K562 (cell line): ENCODE measurements at regions of chr2 and their contacts with region 1.

Region 1: GRCh38 chr2:179751163-179751809 is 110.1 kb downstream of the ZNF385B start:
- DNase-seq: peak in 2 of 4 experiments; percentile 11 to 44
- ATAC-seq: peak; percentile 59; the same call in 2 of the 3 replicates
- H3K4me3 ChIP-seq: no peak overlapping the region
- H3K27ac ChIP-seq: no peak overlapping the region
- H3K4me1 ChIP-seq: no peaks in the 10 kb centered on the region
- H3K27me3 ChIP-seq: no peaks in the 10 kb centered on the region
- CTCF ChIP-seq: peak; percentile 39 to 79 (median 56); a peak in 4 of 6 replicates
- EP300 ChIP-seq: no peak
- POLR2A ChIP-seq: no peak
- RAD21 ChIP-seq: peak; percentile 74 to 87

Region 2: DNA sequence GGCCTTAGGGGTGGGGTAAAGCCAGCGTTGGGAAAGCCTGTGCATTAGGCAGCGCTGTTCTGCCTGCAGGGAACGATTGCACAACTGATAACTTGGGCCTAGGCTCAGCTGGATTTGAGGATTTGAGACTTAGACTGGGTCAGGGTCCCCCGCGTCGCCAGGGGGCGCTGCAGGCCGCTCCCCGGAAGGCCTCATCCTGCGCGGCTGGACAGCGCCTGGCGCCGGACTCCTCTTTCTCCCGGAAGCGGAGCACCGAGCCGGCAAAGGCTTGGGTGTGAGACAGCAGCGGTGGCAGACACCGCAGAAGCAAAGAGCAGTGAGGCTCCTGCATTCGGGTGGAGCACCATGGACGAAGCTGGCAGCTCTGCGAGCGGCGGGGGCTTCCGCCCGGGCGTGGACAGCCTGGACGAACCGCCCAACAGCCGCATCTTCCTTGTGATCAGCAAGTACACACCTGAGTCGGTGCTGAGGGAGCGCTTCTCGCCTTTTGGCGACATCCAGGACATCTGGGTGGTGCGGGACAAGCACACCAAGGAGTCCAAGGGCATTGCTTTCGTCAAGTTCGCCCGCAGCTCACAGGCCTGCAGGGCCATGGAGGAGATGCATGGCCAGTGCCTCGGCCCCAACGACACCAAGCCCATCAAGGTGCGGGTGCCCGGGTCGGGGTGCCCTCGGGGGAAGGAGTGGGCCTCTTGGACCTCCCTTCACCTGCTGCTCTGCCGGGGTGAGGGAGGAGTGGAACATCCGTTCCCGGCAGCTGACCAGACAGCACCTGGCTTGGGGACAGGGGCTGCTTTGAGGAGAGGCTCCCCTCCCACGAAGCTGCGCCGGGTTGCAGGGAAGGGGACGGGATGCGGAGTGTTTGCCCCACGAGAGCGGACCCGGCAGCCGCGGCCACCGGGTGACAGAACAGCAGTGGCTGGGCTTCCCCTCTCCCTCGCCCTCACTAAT is 1638.8 kb before region 1 on chr2 and contains the start of gene RBM45:
- CTCF ChIA-PET with region 1: no interaction called
- POLR2A ChIA-PET with region 1: no interaction called
- in situ Hi-C with region 1: no loop called
- intact Hi-C with region 1: loop called (anchors 5 kb)
- DNase-seq: peak; percentile 95 to 96 (median 95)
- ATAC-seq: peak; percentile 97
- H3K4me3 ChIP-seq: peak within 1 kb of the TSS; percentile 66
- H3K27ac ChIP-seq: peak within 1 kb of the TSS; percentile 54; the same call in 2 of the 3 replicates
- H3K4me1 ChIP-seq: peaks cover 10 to 16% of the 10 kb centered on the region in 2 experiments; a peak in 3 of 5 replicates
- H3K27me3 ChIP-seq: no peaks in the 10 kb centered on the region; a peak in 1 of 5 replicates
- CTCF ChIP-seq: peak; percentile 97 to 99 (median 98)
- EP300 ChIP-seq: peak; percentile 61
- POLR2A ChIP-seq: peak; percentile 93
- RAD21 ChIP-seq: peak; percentile 79 to 86
- polyA plus RNA-seq, gene RBM45: 6.7 to 9.9 TPM

Region 3: GRCh38 chr2:178761759-178762371 is 989.4 kb before region 1 on chr2:
- CTCF ChIA-PET with region 1: no interaction called
- POLR2A ChIA-PET with region 1: no interaction called
- in situ Hi-C with region 1: no loop called
- intact Hi-C with region 1: loop called (anchors 1 kb)
- DNase-seq: peak; percentile 35 to 73 (median 46)
- ATAC-seq: peak; percentile 87
- H3K4me3 ChIP-seq: no peak overlapping the region
- H3K27ac ChIP-seq: no peak overlapping the region
- H3K4me1 ChIP-seq: no peaks in the 10 kb centered on the region
- H3K27me3 ChIP-seq: no peaks in the 10 kb centered on the region; a peak in 1 of 5 replicates
- CTCF ChIP-seq: peak; percentile 72 to 95 (median 82)
- EP300 ChIP-seq: no peak
- POLR2A ChIP-seq: no peak
- RAD21 ChIP-seq: peak; percentile 84 to 90

Region 4: DNA sequence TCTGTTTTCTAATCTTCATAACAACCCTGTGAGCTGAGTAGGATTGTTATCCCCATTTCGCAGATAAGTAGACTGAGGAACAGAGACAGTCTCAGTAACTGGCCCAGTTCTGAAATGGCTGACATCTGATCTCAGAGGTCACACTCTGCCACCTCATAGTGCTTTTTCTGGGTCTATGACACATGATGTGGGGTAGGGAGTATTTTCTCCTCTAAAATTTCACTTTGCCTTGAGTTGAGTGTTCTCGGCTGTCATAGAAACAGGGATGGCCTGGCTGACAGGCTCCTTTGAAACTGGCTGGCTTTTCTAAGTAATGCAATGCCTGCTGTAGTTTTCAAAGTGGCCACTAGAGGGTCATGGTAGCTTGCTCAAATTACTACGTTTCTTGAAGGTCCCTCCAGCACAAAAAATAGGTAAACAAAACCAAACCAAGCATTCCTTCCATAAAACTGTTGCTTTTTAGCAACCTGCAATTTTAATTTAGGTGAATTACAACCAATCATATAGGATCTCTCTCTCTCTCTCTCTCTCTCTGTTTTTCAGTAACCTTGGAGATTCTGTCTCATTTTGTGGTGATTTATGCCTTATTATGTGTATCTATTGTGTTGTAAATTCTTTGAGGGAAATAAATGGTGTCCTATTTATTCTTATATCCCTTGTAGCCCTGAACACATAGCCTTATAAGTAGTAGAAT is 859.9 kb before region 1 on chr2:
- CTCF ChIA-PET with region 1: interaction called, 3 read pairs
- POLR2A ChIA-PET with region 1: no interaction called
- in situ Hi-C with region 1: no loop called
- intact Hi-C with region 1: loop called (anchors 5 kb)
- DNase-seq: peak; percentile 43 to 73 (median 71)
- ATAC-seq: peak; percentile 95
- H3K4me3 ChIP-seq: no peak overlapping the region
- H3K27ac ChIP-seq: no peak overlapping the region
- H3K4me1 ChIP-seq: no peaks in the 10 kb centered on the region
- H3K27me3 ChIP-seq: no peaks in the 10 kb centered on the region
- CTCF ChIP-seq: peak; percentile 71 to 89 (median 84)
- EP300 ChIP-seq: no peak
- POLR2A ChIP-seq: no peak
- RAD21 ChIP-seq: peak; percentile 60 to 76

Region 5: DNA sequence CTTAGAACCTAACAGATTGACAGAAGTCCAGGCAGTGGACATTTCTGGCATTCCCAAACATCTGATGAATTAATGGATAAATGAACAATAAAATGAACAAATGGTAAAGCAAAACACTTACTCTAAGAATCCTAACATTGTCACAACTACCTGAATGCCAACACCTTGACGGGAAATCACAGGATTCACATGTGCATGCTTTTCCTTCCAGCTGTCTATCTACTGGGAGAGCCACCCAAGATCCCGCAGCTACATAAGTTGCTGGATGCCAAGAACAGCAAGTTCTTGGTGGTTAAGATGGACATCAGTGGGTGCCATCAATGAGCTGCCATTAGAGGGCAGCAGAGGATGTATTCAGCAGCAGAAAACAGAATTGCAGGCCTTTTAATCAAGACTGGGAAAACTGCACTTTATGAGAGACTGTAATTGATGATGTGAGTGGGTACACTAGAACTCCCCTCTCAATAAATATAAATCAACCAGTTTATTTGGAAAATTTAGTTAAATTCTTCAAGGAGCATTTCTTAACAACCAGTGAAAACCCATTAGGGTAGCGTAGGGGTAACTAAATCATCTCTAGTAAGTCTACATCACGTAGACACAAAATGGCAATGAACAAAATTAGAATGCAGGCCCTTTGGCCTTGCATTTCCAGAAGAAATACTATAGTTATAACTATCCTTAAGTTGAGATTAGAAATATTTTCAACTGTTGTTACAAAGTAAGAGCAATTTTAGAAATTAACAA is 532.3 kb before region 1 on chr2:
- CTCF ChIA-PET with region 1: interaction called, 6 read pairs
- POLR2A ChIA-PET with region 1: no interaction called
- in situ Hi-C with region 1: no loop called
- intact Hi-C with region 1: loop called (anchors 1 kb)
- DNase-seq: peak; percentile 30 to 73 (median 39)
- ATAC-seq: peak; percentile 85
- H3K4me3 ChIP-seq: no peak overlapping the region
- H3K27ac ChIP-seq: no peak overlapping the region
- H3K4me1 ChIP-seq: no peaks in the 10 kb centered on the region
- H3K27me3 ChIP-seq: no peaks in the 10 kb centered on the region
- CTCF ChIP-seq: peak; percentile 70 to 78 (median 73)
- EP300 ChIP-seq: no peak
- POLR2A ChIP-seq: no peak
- RAD21 ChIP-seq: peak; percentile 64 to 74

Region 6: DNA sequence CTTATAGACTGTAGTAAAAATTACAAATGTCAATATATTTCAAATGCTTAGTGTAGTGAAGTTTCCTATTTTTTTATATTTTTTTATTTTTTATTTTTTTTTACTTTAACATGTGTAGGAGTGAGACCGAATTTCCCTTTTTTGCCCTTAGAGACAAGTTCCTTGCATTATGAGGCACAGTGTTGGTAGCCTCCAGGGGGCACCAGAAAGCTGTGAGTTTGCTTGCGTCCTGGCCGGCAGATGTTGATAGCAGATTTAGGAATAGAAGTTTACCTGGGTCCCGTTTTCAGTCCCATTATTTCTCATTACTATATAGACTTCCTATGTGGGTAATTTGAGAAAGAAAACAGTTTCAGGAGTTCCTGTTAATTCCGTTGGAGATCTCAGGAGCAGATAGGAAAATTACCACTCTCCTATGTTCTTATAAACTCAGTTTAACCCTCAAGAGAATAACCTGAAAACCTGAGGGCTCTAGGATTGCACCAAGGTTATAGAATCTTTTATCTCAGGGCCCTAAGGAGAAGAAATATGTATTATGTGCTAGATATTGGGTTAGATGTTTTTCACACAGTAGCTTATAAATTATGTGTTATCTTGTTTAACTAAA is 329.1 kb before region 1 on chr2:
- CTCF ChIA-PET with region 1: no interaction called
- POLR2A ChIA-PET with region 1: no interaction called
- in situ Hi-C with region 1: no loop called
- intact Hi-C with region 1: loop called (anchors 1 kb)
- DNase-seq: peak in 3 of 4 experiments; percentile 15 to 63 (median 20)
- ATAC-seq: peak; percentile 85
- H3K4me3 ChIP-seq: no peak overlapping the region
- H3K27ac ChIP-seq: no peak overlapping the region
- H3K4me1 ChIP-seq: no peaks in the 10 kb centered on the region
- H3K27me3 ChIP-seq: no peaks in the 10 kb centered on the region
- CTCF ChIP-seq: peak; percentile 58 to 60 (median 59)
- EP300 ChIP-seq: no peak
- POLR2A ChIP-seq: no peak
- RAD21 ChIP-seq: peak; percentile 32 to 40